Activated B cell treated with CpG ODN at 0.5 μM for 24 hours (primary cell): ENCODE measurements at regions of chr14 and their contacts with region 1.

Region 1: DNA sequence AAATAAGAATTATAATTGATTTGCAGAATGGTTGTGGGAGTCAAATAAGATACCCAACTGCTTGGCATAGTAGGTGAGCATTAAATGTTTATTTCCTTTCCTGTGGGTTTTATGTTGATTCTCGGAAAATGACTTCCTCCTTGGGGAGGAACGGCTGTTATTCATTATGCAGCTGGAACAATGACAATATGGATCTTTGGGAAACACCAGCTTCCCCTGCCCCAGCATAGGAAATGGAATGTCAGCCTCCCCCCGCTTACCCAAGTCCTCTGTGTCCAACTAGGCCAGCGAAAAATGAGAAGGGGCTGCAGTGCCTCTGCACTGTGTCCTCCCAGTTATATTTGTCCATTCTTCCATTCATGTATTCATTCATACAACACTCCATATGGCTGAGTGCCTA is 11.7 kb upstream of the CCDC177 start:
- DNase-seq: no peak
- ATAC-seq: no peak
- H3K4me3 Mint-ChIP-seq: no peak overlapping the region
- H3K27ac Mint-ChIP-seq: no peak overlapping the region
- H3K4me1 Mint-ChIP-seq: peaks cover 2% of the 10 kb centered on the region
- H3K27me3 Mint-ChIP-seq: peaks cover 4% of the 10 kb centered on the region
- CTCF ChIP-seq: no peak

Region 2: DNA sequence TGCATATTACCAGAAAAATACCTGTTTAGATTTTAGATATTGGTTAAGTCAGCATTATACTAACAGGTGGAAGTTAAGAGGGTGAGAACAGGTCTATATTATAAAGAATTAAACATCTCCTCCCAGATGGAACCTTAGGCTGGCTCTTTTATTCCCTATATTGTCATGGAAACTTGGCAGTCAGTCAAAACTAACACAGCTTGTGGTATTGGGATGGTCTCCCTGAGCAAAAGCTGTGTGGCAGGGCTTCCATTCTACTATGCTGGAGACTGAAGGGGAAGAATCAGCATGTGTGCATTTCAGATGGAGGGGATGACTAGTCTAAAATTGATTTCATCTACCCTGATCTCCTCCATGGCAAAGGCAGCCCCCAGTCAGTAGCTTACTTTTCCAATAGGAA is 359.5 kb after region 1 on chr14:
- CTCF ChIA-PET with region 1: no interaction called
- POLR2A ChIA-PET with region 1: no interaction called
- intact Hi-C with region 1: no loop called
- DNase-seq: no peak
- ATAC-seq: no peak
- H3K4me3 Mint-ChIP-seq: no peak overlapping the region
- H3K27ac Mint-ChIP-seq: no peak overlapping the region
- H3K4me1 Mint-ChIP-seq: no peaks in the 10 kb centered on the region
- H3K27me3 Mint-ChIP-seq: peaks cover 30% of the 10 kb centered on the region
- CTCF ChIP-seq: no peak

Region 3: GRCh38 chr14:70027785-70028428 is 441.5 kb after region 1 on chr14:
- CTCF ChIA-PET with region 1: interaction called, 5 read pairs
- POLR2A ChIA-PET with region 1: no interaction called
- intact Hi-C with region 1: loop called (anchors 2 kb)
- DNase-seq: peak; percentile 55
- ATAC-seq: peak; percentile 47
- H3K4me3 Mint-ChIP-seq: no peak overlapping the region
- H3K27ac Mint-ChIP-seq: no peak overlapping the region
- H3K4me1 Mint-ChIP-seq: no peaks in the 10 kb centered on the region
- H3K27me3 Mint-ChIP-seq: peaks cover 4% of the 10 kb centered on the region
- CTCF ChIP-seq: peak; percentile 19

Region 4: GRCh38 chr14:70073924-70074566 is 487.6 kb after region 1 on chr14:
- CTCF ChIA-PET with region 1: no interaction called
- POLR2A ChIA-PET with region 1: no interaction called
- intact Hi-C with region 1: loop called (anchors 5 kb)
- DNase-seq: no peak
- ATAC-seq: no peak
- H3K4me3 Mint-ChIP-seq: no peak overlapping the region
- H3K27ac Mint-ChIP-seq: no peak overlapping the region
- H3K4me1 Mint-ChIP-seq: no peaks in the 10 kb centered on the region
- H3K27me3 Mint-ChIP-seq: peaks cover 2% of the 10 kb centered on the region
- CTCF ChIP-seq: no peak